ENCODE measurements at regions of chr4 and their contacts with region 1.

Region 1: GRCh38 chr4:76949276-76950051 is at the start of gene SEPTIN11:
- DNase-seq: peak; percentile 91
- H3K4me3 ChIP-seq: peak within 1 kb of the TSS; percentile 97
- CTCF ChIP-seq: no peak

Region 2: DNA sequence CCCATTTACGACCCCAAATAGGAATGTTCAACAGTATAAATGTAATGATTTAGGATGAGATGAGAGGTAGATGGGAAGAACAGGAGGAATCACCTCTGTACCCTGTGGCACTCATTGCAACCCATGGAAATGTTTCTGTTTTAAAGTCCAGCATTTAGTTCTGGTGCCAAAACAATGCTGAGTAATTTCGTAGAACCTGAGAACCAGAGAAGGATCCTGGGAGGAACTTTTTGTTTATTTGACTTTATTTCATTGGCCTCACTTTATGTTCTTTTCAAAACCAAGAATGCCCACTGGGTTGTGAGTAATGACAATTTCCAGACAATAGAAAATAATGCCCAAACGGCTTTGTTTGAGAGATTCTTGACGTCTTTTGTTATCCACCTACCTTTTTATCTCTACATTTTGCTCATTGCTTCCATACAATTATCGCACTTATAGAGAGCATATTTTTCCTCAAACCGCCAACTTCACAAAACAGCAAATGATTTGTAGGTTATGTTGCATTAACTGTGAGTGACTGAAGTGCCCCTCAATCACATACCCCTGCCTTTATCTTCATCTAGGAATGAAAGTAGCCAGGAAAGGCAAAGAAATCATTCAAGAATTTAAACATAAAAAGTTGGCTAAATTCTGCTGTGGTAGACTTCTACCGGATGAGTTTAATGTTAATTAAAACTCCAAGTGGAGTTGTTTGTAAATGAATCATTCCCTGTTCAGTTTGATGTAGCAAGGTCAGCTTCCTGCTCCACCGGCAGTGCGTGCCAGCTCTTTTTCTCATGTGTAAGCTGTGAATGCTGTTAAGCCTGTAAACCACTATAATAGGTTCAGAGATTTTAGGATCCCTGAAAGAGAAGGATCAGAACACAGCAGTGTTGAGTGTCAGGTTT is 402.9 kb before region 1 on chr4:
- in situ Hi-C with region 1: loop called (anchors 25 kb)
- DNase-seq: peak; percentile 83
- H3K4me3 ChIP-seq: no peak overlapping the region
- CTCF ChIP-seq: no peak

Region 3: DNA sequence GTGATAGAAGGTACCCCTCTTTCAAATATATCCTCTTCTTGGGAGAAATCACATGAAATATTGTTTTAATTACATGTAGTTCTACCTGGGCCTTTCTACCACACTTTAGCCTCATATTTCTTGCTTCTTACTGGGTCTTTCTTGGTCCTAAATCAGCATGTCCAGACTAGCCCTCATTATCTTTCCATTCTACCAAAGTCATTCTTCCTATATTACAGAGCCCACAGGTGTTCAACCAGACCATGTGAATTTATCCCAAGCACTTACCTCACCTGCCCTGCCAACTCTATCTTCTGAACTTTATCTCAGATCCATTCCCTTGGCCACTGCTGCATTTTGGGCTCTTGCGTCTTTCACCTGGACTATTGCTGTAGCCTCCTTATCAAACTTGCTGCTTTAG is 39.8 kb before region 1 on chr4:
- in situ Hi-C with region 1: no loop called
- DNase-seq: no peak
- H3K4me3 ChIP-seq: no peak overlapping the region
- CTCF ChIP-seq: no peak

Region 4: DNA sequence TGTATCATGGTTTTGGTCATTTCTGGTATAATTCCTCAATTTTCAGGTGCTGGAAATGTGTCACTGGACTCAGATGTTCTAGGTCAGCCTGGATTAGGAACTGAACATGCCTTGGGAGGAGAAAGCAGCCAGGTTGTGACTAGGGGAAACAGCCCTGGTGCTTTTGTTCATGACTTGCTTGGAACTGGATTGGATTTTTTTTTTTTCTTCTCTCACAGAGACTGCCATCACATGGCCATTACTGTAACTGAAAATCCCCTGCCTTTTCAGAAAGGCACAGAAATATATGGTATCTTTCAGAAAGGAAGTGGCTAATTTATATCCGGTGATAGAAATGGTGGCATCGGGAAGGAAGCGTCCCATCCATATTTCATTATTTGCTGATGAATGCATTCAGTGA is 34.7 kb after region 1 on chr4:
- in situ Hi-C with region 1: no loop called
- DNase-seq: no peak
- H3K4me3 ChIP-seq: no peak overlapping the region
- CTCF ChIP-seq: peak; percentile 39